A673 (cell line): ENCODE measurements at regions of chr2 and their contacts with region 1.

Region 1: GRCh38 chr2:88627056-88627855 is at the start of gene EIF2AK3:
- DNase-seq: peak; percentile 100
- H3K4me3 ChIP-seq: peak within 1 kb of the TSS; percentile 82
- H3K27ac ChIP-seq: peak within 1 kb of the TSS; percentile 71
- H3K4me1 ChIP-seq: no peaks in the 10 kb centered on the region
- H3K27me3 ChIP-seq: no peaks in the 10 kb centered on the region
- CTCF ChIP-seq: no peak
- total RNA-seq, gene EIF2AK3: 5.1 and 6.7 TPM in 2 replicates

Region 2: GRCh38 chr2:88199912-88200682 is 427.2 kb before region 1 on chr2:
- CTCF ChIA-PET with region 1: no interaction called
- POLR2A ChIA-PET with region 1: no interaction called
- intact Hi-C with region 1: no loop called
- DNase-seq: no peak
- H3K4me3 ChIP-seq: no peak overlapping the region
- H3K27ac ChIP-seq: no peak overlapping the region
- H3K4me1 ChIP-seq: peaks cover 10% of the 10 kb centered on the region
- H3K27me3 ChIP-seq: peaks cover 58% of the 10 kb centered on the region
- CTCF ChIP-seq: no peak

Region 3: GRCh38 chr2:88596141-88596830 is 31.0 kb before region 1 on chr2:
- CTCF ChIA-PET with region 1: no interaction called
- POLR2A ChIA-PET with region 1: no interaction called
- intact Hi-C with region 1: loop called (anchors 2 kb)
- DNase-seq: no peak
- H3K4me3 ChIP-seq: no peak overlapping the region
- H3K27ac ChIP-seq: no peak overlapping the region
- H3K4me1 ChIP-seq: peaks cover 26% of the 10 kb centered on the region
- H3K27me3 ChIP-seq: no peaks in the 10 kb centered on the region
- CTCF ChIP-seq: no peak

Region 4: DNA sequence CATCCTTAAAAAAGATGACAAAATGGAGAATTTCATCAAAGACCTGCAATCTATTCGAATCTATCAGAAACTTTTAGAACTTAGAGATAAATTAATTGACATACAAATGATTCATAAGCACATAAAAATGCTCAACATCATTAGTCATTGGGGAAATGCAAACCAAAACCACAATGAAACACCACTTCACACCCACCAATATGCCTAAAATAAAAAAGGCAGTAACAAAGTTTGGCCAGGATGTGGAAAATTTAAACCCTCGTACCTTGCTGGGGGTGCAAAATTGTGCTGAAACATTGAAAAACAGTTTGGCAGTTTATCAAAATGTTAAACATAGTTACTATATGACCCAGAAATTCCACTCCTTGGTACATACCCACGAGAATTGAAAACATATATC is 11.5 kb after region 1 on chr2:
- CTCF ChIA-PET with region 1: no interaction called
- POLR2A ChIA-PET with region 1: no interaction called
- intact Hi-C with region 1: loop called (anchors 1 kb)
- DNase-seq: peak; percentile 11
- H3K4me3 ChIP-seq: no peak overlapping the region
- H3K27ac ChIP-seq: no peak overlapping the region
- H3K4me1 ChIP-seq: no peaks in the 10 kb centered on the region
- H3K27me3 ChIP-seq: no peaks in the 10 kb centered on the region
- CTCF ChIP-seq: no peak